CD8-positive, alpha-beta T cell (primary cell): ENCODE measurements at regions of chr19 and their contacts with region 1.

Region 1: GRCh38 chr19:9986787-9987281 is 23.5 kb downstream of the COL5A3 start:
- DNase-seq: no peak
- ATAC-seq: no peak
- H3K4me3 ChIP-seq: no peak overlapping the region
- H3K4me3 Mint-ChIP-seq: no peak overlapping the region
- H3K27ac ChIP-seq: no peak overlapping the region
- H3K27ac Mint-ChIP-seq: no peak overlapping the region
- H3K4me1 ChIP-seq: no peaks in the 10 kb centered on the region
- H3K4me1 Mint-ChIP-seq: no peaks in the 10 kb centered on the region
- H3K27me3 ChIP-seq: no peaks in the 10 kb centered on the region
- H3K27me3 Mint-ChIP-seq: peaks cover 8% of the 10 kb centered on the region
- CTCF ChIP-seq: no peak

Region 2: DNA sequence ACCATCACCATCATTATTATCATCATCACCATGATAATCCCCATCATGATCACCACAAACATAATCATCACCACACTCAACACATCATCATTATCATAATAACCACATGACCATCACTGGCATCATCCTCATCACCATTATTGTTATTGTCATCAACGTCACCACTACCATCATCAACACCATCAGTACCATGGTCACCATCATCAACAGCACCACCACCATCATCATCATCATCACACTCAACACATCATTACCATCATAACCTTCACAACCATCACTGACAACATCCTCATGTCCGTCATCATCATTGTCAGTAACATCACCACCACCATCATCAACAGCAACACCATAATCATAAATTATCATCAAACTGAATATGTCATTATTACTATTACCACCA is 1081.5 kb before region 1 on chr19:
- CTCF ChIA-PET with region 1: no interaction called
- POLR2A ChIA-PET with region 1: no interaction called
- intact Hi-C with region 1: loop called in 1 of 2 experiments (anchors 5 kb)
- DNase-seq: no peak
- ATAC-seq: no peak
- H3K4me3 ChIP-seq: no peak overlapping the region
- H3K4me3 Mint-ChIP-seq: no peak overlapping the region
- H3K27ac ChIP-seq: no peak overlapping the region
- H3K27ac Mint-ChIP-seq: no peak overlapping the region
- H3K4me1 ChIP-seq: no peaks in the 10 kb centered on the region
- H3K4me1 Mint-ChIP-seq: no peaks in the 10 kb centered on the region
- H3K27me3 ChIP-seq: no peaks in the 10 kb centered on the region
- H3K27me3 Mint-ChIP-seq: peaks cover 10% of the 10 kb centered on the region
- CTCF ChIP-seq: no peak

Region 3: GRCh38 chr19:9966448-9967143 is 20.2 kb before region 1 on chr19:
- CTCF ChIA-PET with region 1: no interaction called
- POLR2A ChIA-PET with region 1: no interaction called
- intact Hi-C with region 1: no loop called
- DNase-seq: no peak
- ATAC-seq: no peak
- H3K4me3 ChIP-seq: no peak overlapping the region
- H3K4me3 Mint-ChIP-seq: no peak overlapping the region
- H3K27ac ChIP-seq: no peak overlapping the region
- H3K27ac Mint-ChIP-seq: no peak overlapping the region
- H3K4me1 ChIP-seq: no peaks in the 10 kb centered on the region
- H3K4me1 Mint-ChIP-seq: no peaks in the 10 kb centered on the region
- H3K27me3 ChIP-seq: peaks cover 7% of the 10 kb centered on the region in 2 experiments
- H3K27me3 Mint-ChIP-seq: peaks cover 36% of the 10 kb centered on the region
- CTCF ChIP-seq: no peak